HepG2 (cell line): ENCODE measurements at regions of chr17 and their contacts with region 1.

Region 1: GRCh38 chr17:61412143-61412859 is 12.7 kb downstream of the TBX2 start:
- DNase-seq: peak; percentile 64
- ATAC-seq: peak; percentile 73
- H3K4me3 ChIP-seq: peak overlapping the region; percentile 69 to 86 (median 77)
- H3K27ac ChIP-seq: peak overlapping the region; percentile 68
- H3K4me1 ChIP-seq: peaks cover 69% of the 10 kb centered on the region
- H3K27me3 ChIP-seq: no peaks in the 10 kb centered on the region
- CTCF ChIP-seq: peak; percentile 99
- EP300 ChIP-seq: peak in 1 of 2 experiments; percentile 40; a peak in 1 of 4 replicates
- POLR2A ChIP-seq: peak in 1 of 2 experiments; percentile 53; a peak in 3 of 4 replicates
- RAD21 ChIP-seq: peak; percentile 100

Region 2: GRCh38 chr17:61002316-61002736 is 410.0 kb before region 1 on chr17:
- CTCF ChIA-PET with region 1: interaction called, 13 read pairs
- POLR2A ChIA-PET with region 1: no interaction called
- in situ Hi-C with region 1: no loop called
- intact Hi-C with region 1: loop called (anchors 5 kb)
- DNase-seq: peak; percentile 41
- ATAC-seq: no peak
- H3K4me3 ChIP-seq: no peak overlapping the region
- H3K27ac ChIP-seq: no peak overlapping the region
- H3K4me1 ChIP-seq: no peaks in the 10 kb centered on the region
- H3K27me3 ChIP-seq: no peaks in the 10 kb centered on the region
- CTCF ChIP-seq: peak; percentile 69
- EP300 ChIP-seq: no peak
- POLR2A ChIP-seq: no peak
- RAD21 ChIP-seq: peak; percentile 48; the same call in 1 of the 2 replicates

Region 3: GRCh38 chr17:61399131-61400057 is 12.9 kb before region 1 on chr17 and contains the start of gene TBX2:
- CTCF ChIA-PET with region 1: interaction called, 3 read pairs
- POLR2A ChIA-PET with region 1: interaction called, 34 read pairs
- in situ Hi-C with region 1: no loop called
- intact Hi-C with region 1: no loop called
- DNase-seq: peak; percentile 80
- ATAC-seq: peak; percentile 74
- H3K4me3 ChIP-seq: peak within 1 kb of the TSS; percentile 72 to 93 (median 86)
- H3K27ac ChIP-seq: peak within 1 kb of the TSS; percentile 81
- H3K4me1 ChIP-seq: peaks cover 46% of the 10 kb centered on the region
- H3K27me3 ChIP-seq: no peaks in the 10 kb centered on the region
- CTCF ChIP-seq: peak; percentile 53
- EP300 ChIP-seq: peak in 1 of 2 experiments; percentile 5; a peak in 1 of 4 replicates
- POLR2A ChIP-seq: peak; percentile 26 to 70; a peak in 3 of 4 replicates
- RAD21 ChIP-seq: peak; percentile 67; the same call in 1 of the 2 replicates
- total RNA-seq, gene TBX2: 10.2 and 15.3 TPM in 2 replicates

Region 4: GRCh38 chr17:61551255-61551742 is 139.0 kb after region 1 on chr17:
- CTCF ChIA-PET with region 1: interaction called, 52 read pairs
- POLR2A ChIA-PET with region 1: interaction called, 3 read pairs
- in situ Hi-C with region 1: no loop called
- intact Hi-C with region 1: loop called (anchors 1 kb)
- DNase-seq: peak; percentile 62
- ATAC-seq: peak; percentile 74
- H3K4me3 ChIP-seq: no peak overlapping the region; a peak in 1 of 6 replicates
- H3K27ac ChIP-seq: no peak overlapping the region
- H3K4me1 ChIP-seq: peaks cover 7% of the 10 kb centered on the region
- H3K27me3 ChIP-seq: no peaks in the 10 kb centered on the region; a peak in 1 of 5 replicates
- CTCF ChIP-seq: peak; percentile 83
- EP300 ChIP-seq: no peak
- POLR2A ChIP-seq: no peak
- RAD21 ChIP-seq: peak; percentile 84

Region 5: GRCh38 chr17:61583242-61583641 is 170.9 kb after region 1 on chr17:
- CTCF ChIA-PET with region 1: interaction called, 30 read pairs
- POLR2A ChIA-PET with region 1: interaction called, 7 read pairs
- in situ Hi-C with region 1: loop called (anchors 5 kb)
- intact Hi-C with region 1: loop called (anchors 1 kb)
- DNase-seq: peak; percentile 74
- ATAC-seq: peak; percentile 56
- H3K4me3 ChIP-seq: no peak overlapping the region
- H3K27ac ChIP-seq: no peak overlapping the region
- H3K4me1 ChIP-seq: peaks cover 53% of the 10 kb centered on the region
- H3K27me3 ChIP-seq: no peaks in the 10 kb centered on the region
- CTCF ChIP-seq: peak; percentile 55
- EP300 ChIP-seq: no peak
- POLR2A ChIP-seq: no peak
- RAD21 ChIP-seq: no peak